ENCODE measurements at regions of chr15 and their contacts with region 1.

Region 1: DNA sequence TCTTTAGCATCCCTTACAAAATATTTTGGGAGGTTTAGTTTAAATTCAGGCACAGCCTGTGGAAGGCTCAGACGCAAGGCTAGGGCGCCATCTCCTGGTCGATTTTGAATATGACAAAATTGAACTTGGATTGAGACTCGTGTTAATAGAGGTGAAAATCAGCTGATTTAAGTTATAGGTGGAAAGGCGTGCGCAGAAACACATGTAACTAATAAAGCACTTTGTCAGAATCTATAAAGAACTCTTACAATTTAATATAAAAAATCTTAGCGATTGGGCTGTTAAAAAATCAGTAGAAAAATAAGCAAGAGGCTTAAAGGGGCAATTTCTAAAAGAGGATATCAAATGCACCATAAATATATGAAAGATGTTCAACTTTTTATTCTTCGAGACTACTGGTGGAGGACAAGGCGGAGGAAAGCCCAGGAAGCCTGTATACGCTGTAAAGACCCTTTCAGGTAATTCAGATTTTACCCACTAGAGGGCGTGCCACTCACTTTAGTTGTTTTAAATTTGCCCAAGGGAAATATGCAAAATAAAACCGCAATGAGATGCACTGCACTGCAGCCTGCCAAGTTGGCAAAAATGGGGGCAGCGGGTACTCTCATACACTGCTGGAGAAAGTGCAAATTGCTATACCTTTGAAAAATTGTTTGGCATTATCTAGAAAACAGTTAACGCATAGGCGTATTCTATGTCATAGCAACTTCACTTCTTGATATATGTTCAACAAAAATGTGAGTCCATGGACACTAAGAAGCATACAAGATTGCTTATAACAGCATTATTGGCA is 64.7 kb downstream of the SLC30A4 start:
- DNase-seq: no peak
- H3K4me3 ChIP-seq: peak overlapping the region; percentile 55
- CTCF ChIP-seq: peak; percentile 60

Region 2: DNA sequence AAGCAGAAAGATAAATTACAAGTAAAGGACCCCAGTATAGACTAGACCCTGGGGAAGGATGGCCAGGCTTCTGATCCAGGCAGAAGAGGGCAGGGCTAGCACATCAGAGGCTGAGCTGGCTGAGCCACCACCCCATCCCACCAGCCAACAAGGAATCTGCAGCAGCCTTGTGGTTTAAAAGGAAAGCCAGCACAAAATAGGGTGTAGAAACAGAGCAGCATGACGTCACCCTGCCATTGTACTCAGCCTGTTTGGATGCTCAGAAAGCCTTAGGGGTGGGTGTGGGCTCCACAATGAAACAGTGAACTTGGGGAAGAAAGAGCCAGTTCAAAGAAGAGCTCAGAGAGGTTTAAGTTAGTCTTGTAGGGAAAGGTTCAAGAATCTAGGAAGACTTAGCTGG is 299.9 kb before region 1 on chr15:
- CTCF ChIA-PET with region 1: interaction called, 34 read pairs
- POLR2A ChIA-PET with region 1: no interaction called
- DNase-seq: peak; percentile 37
- H3K4me3 ChIP-seq: no peak overlapping the region
- CTCF ChIP-seq: no peak

Region 3: DNA sequence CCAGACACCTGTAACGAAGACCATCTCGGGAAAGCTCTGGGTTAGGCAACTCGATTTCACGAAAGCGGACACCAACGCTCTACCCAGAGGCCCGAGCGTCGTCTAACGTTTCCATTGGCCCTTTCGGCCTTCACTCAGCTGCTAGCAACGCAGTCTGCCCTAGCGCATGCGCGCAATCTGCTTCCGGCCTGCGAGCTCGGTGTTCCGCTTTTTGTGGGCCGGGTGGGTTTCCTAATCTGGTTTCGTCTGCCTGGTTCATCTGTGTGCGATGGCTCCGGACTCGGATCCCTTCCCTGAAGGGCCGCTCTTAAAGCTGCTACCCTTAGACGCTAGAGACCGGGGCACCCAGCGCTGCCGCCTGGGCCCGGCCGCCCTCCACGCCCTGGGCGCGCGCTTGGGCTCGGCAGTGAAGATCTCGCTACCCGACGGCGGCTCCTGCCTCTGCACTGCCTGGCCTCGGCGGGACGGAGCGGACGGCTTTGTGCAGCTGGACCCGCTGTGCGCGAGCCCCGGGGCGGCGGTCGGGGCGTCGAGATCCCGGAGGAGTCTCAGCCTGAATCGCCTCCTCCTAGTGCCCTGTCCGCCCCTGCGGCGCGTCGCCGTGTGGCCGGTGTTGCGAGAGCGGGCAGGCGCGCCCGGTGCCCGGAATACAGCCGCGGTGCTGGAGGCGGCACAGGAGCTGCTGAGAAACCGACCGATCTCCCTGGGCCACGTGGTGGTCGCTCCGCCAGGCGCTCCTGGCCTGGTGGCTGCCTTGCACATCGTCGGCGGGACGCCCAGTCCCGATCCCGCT is 55.5 kb before region 1 on chr15:
- CTCF ChIA-PET with region 1: interaction called, 18 read pairs
- POLR2A ChIA-PET with region 1: no interaction called
- DNase-seq: peak; percentile 93
- H3K4me3 ChIP-seq: peak overlapping the region; percentile 82
- CTCF ChIP-seq: no peak

Region 4: GRCh38 chr15:45429974-45430792 is 27.7 kb before region 1 on chr15:
- CTCF ChIA-PET with region 1: interaction called, 363 read pairs
- POLR2A ChIA-PET with region 1: no interaction called
- DNase-seq: no peak
- H3K4me3 ChIP-seq: peak overlapping the region; percentile 59
- CTCF ChIP-seq: peak; percentile 98

Region 5: DNA sequence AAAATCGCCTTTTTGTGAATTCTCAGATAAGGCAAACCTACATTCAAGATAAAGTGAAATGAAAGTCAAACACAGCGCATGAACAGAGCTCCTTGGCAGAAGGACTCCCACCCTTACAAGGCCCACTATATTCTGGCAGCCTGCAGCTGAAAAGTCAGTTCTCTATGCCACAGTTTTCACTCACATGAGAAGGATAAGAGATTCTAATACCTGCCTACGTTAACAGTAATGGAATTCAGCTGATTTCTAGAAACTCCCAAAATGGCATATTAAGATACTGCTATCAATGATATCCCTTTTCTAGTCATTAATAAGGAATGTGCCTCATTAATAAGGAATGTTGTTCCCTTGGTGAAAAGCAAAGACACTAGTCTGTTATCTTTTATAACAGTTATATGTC is 37.8 kb after region 1 on chr15:
- CTCF ChIA-PET with region 1: interaction called, 23 read pairs
- POLR2A ChIA-PET with region 1: no interaction called
- DNase-seq: no peak
- H3K4me3 ChIP-seq: no peak overlapping the region
- CTCF ChIP-seq: no peak

Region 6: GRCh38 chr15:45594319-45594718 is 136.5 kb after region 1 on chr15:
- CTCF ChIA-PET with region 1: interaction called, 52 read pairs
- POLR2A ChIA-PET with region 1: no interaction called
- DNase-seq: no peak
- H3K4me3 ChIP-seq: no peak overlapping the region
- CTCF ChIP-seq: no peak

Region 7: DNA sequence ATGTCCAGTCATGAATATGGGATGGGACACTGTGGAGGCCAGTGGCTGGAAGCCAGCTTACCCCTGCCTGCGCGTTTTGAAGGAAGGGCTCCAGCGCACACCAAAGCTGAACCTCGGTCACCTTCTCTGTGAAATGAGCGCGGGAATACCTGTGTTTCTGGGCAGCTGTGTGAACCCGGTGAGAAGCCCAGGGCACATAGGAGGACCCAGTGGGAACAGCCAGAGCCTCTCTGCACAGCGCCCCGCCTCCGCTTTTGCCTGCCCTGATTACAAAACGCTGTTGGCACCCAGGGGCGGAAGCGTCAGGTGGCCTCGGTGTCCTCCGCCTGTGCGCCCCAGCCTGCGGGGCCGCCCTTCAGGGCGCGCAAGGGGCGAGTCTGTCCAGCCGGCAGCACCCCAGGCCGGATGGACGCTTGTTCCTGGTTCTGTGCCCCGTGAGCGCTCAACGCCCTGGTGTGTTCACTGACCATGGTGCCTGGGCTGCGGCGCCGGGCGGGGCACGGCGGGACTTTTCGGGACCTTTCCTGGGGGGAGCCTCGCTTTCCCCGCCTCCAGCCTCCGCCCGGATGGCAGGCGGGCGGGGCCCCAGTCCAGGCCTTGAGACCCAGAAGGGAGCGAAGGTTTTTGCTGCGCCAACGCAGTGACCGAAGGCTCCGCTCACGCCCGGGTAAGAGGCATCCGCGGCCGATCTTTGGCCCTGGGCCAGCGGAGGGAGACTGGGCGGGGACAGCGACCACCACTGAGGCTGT is 176.8 kb after region 1 on chr15 and contains the start of gene SQOR:
- CTCF ChIA-PET with region 1: interaction called, 16 read pairs
- POLR2A ChIA-PET with region 1: no interaction called
- DNase-seq: no peak
- H3K4me3 ChIP-seq: peak within 1 kb of the TSS; percentile 68
- CTCF ChIP-seq: no peak

Measured in AG04449 (cell line).